ENCODE measurements at regions of chr19 and their contacts with region 1.

Region 1: DNA sequence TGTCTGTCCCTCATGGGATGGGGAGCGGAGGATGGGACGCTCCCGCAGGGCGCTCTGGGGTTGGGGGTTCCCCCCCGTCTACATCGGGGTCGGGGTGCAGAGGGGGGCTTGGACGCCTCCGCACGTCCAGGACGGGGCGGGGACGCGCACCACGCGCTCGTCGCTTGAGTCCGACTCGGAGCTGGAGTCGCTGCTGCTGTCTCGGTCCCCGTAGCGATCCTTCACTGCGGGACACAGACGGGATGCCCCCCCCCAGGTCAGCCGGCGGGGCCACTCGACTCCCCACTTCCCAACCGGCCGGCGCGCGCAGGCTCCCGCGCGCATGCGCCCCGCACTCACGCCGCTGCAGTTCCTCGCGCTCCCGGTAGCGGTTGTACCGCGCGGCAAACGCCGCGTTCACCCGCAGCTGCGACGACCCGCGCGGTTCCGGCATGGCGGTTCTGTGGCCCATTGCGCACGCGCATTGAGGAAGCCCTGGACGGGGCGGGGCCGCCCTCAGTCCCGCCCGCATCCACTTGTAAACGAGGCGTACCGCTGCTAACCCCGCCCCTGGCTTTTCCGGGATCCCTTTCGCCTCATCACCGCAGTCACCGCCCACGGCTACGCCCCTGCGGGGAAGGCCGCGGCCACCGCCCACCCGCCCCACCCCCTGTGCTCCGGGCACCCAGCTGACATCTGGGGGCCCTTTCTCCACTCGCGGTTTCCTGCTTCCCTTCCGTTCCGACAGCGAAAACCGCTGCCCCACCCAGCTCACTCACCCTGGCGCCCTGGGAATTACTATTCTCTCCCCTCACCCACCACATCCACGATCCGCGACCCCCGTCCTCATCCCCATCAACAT is at the start of gene KRI1:
- DNase-seq: peak; percentile 100
- H3K4me3 Mint-ChIP-seq: peak within 1 kb of the TSS; percentile 92
- H3K27ac Mint-ChIP-seq: peak within 1 kb of the TSS; percentile 97
- H3K4me1 Mint-ChIP-seq: peaks cover 38% of the 10 kb centered on the region
- H3K27me3 Mint-ChIP-seq: no peaks in the 10 kb centered on the region
- total RNA-seq, gene KRI1: 45.5 TPM

Region 2: GRCh38 chr19:10286803-10287737 is 278.7 kb before region 1 on chr19 and contains the start of gene ICAM4:
- CTCF ChIA-PET with region 1: no interaction called
- POLR2A ChIA-PET with region 1: no interaction called
- DNase-seq: peak; percentile 67
- H3K4me3 Mint-ChIP-seq: peak within 1 kb of the TSS; percentile 50
- H3K27ac Mint-ChIP-seq: peak within 1 kb of the TSS; percentile 65
- H3K4me1 Mint-ChIP-seq: peaks cover 72% of the 10 kb centered on the region
- H3K27me3 Mint-ChIP-seq: peaks cover 44% of the 10 kb centered on the region
- total RNA-seq, gene ICAM4: 1.5 to 2.0 TPM

Region 3: GRCh38 chr19:10416380-10417257 is 149.2 kb before region 1 on chr19:
- CTCF ChIA-PET with region 1: interaction called, 8 read pairs
- POLR2A ChIA-PET with region 1: interaction called, 17 read pairs
- DNase-seq: peak; percentile 98
- H3K4me3 Mint-ChIP-seq: peak overlapping the region; percentile 73
- H3K27ac Mint-ChIP-seq: peak overlapping the region; percentile 88
- H3K4me1 Mint-ChIP-seq: peaks cover 74% of the 10 kb centered on the region
- H3K27me3 Mint-ChIP-seq: peaks cover 19% of the 10 kb centered on the region

Region 4: GRCh38 chr19:10454267-10454666 is 111.5 kb before region 1 on chr19:
- CTCF ChIA-PET with region 1: no interaction called
- POLR2A ChIA-PET with region 1: no interaction called
- DNase-seq: no peak
- H3K4me3 Mint-ChIP-seq: no peak overlapping the region
- H3K27ac Mint-ChIP-seq: no peak overlapping the region
- H3K4me1 Mint-ChIP-seq: peaks cover 15% of the 10 kb centered on the region
- H3K27me3 Mint-ChIP-seq: no peaks in the 10 kb centered on the region

Region 5: DNA sequence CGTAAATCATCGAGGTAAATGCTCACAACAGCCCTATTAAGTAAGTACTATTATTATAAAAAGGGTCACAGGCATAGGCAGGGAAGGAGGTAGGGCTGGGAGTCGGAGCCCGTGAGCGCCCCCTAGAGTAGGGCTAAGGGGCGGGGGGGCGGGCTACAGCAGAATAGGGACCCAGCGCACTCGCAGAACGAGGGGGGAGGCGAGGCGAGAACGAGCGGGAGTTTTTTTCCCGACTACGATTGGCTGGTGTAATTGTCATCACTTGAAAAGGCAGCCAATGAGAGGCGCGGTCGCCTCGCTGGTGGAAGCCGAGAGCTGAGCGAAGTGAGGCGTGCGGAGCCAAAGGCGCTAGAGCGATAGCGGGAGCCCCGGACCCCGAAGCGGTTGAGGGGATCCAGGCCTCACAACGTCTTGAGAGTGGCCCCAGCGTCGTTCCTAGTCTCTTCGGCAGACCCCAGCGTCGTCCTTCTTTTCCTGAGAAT is 86.8 kb before region 1 on chr19:
- CTCF ChIA-PET with region 1: interaction called, 10 read pairs
- POLR2A ChIA-PET with region 1: no interaction called
- DNase-seq: peak; percentile 88
- H3K4me3 Mint-ChIP-seq: no peak overlapping the region
- H3K27ac Mint-ChIP-seq: no peak overlapping the region
- H3K4me1 Mint-ChIP-seq: peaks cover 24% of the 10 kb centered on the region
- H3K27me3 Mint-ChIP-seq: no peaks in the 10 kb centered on the region

Region 6: GRCh38 chr19:10525624-10526023 is 40.2 kb before region 1 on chr19:
- CTCF ChIA-PET with region 1: no interaction called
- POLR2A ChIA-PET with region 1: no interaction called
- DNase-seq: no peak
- H3K4me3 Mint-ChIP-seq: no peak overlapping the region
- H3K27ac Mint-ChIP-seq: no peak overlapping the region
- H3K4me1 Mint-ChIP-seq: no peaks in the 10 kb centered on the region
- H3K27me3 Mint-ChIP-seq: peaks cover 7% of the 10 kb centered on the region

Region 7: GRCh38 chr19:10551698-10552301 is 14.0 kb before region 1 on chr19:
- CTCF ChIA-PET with region 1: interaction called, 73 read pairs
- POLR2A ChIA-PET with region 1: interaction called, 141 read pairs
- DNase-seq: peak; percentile 63
- H3K4me3 Mint-ChIP-seq: no peak overlapping the region
- H3K27ac Mint-ChIP-seq: peak overlapping the region; percentile 56
- H3K4me1 Mint-ChIP-seq: peaks cover 52% of the 10 kb centered on the region
- H3K27me3 Mint-ChIP-seq: no peaks in the 10 kb centered on the region

Region 8: DNA sequence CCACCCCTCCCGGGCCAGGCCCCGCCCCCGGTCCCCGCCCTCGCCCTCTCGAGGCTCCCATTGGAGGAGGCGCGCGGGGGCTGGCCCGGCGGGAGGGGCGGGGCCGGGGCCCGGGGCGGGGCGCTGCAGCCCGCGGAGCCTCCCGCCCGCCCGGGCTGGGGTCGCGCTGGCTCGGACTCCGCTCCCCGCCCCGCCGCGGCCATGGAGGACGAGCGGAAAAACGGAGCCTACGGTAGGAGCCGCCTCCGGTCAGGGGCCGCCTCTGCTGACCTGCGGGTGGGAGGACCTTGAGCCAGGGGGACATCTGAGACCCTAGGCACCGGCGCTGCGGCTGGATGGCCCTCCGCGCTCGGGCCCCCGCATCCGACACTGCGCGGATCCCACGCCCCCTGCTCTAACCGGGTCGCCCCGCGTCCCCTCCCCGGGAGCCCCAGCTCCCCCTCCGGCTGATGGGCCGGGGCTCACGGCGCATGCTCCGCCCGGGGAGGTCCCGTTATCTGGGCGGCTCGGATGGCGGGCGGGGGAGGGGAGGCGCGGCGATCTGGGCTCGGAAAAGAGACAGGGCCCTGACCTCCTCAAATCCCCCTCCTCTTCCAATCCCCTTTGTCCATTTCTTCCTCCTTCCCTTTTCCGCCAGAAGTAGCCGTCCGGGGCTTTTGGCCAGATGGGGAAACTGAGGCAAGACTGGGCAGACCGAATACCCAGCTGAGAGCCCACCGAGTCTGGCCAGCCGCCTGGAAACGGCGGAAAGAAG is 36.7 kb after region 1 on chr19:
- CTCF ChIA-PET with region 1: interaction called, 3 read pairs
- POLR2A ChIA-PET with region 1: interaction called, 41 read pairs
- DNase-seq: peak; percentile 91
- H3K4me3 Mint-ChIP-seq: peak overlapping the region; percentile 95
- H3K27ac Mint-ChIP-seq: peak overlapping the region; percentile 99
- H3K4me1 Mint-ChIP-seq: peaks cover 25% of the 10 kb centered on the region
- H3K27me3 Mint-ChIP-seq: peaks cover 3% of the 10 kb centered on the region

Region 9: GRCh38 chr19:10612491-10613119 is 46.8 kb after region 1 on chr19:
- CTCF ChIA-PET with region 1: no interaction called
- POLR2A ChIA-PET with region 1: no interaction called
- DNase-seq: no peak
- H3K4me3 Mint-ChIP-seq: no peak overlapping the region
- H3K27ac Mint-ChIP-seq: no peak overlapping the region
- H3K4me1 Mint-ChIP-seq: peaks cover 28% of the 10 kb centered on the region
- H3K27me3 Mint-ChIP-seq: no peaks in the 10 kb centered on the region

Region 10: GRCh38 chr19:10653715-10654492 is 88.1 kb after region 1 on chr19 and contains the start of gene ILF3:
- CTCF ChIA-PET with region 1: interaction called, 5 read pairs
- POLR2A ChIA-PET with region 1: interaction called, 15 read pairs
- DNase-seq: peak; percentile 100
- H3K4me3 Mint-ChIP-seq: peak within 1 kb of the TSS; percentile 91
- H3K27ac Mint-ChIP-seq: peak within 1 kb of the TSS; percentile 97
- H3K4me1 Mint-ChIP-seq: peaks cover 45% of the 10 kb centered on the region
- H3K27me3 Mint-ChIP-seq: peaks cover 2% of the 10 kb centered on the region
- total RNA-seq, gene ILF3: 301 to 324 TPM

Region 11: GRCh38 chr19:10695401-10696398 is 129.9 kb after region 1 on chr19:
- CTCF ChIA-PET with region 1: interaction called, 18 read pairs
- POLR2A ChIA-PET with region 1: interaction called, 3 read pairs
- DNase-seq: peak; percentile 93
- H3K4me3 Mint-ChIP-seq: peak overlapping the region; percentile 53
- H3K27ac Mint-ChIP-seq: no peak overlapping the region
- H3K4me1 Mint-ChIP-seq: peaks cover 18% of the 10 kb centered on the region
- H3K27me3 Mint-ChIP-seq: peaks cover 19% of the 10 kb centered on the region